Activated naive CD4-positive, alpha-beta T cell treated with anti-CD3 and anti-CD28 coated beads for 36 hours (primary cell): ENCODE measurements at regions of chr1 and their contacts with region 1.

Region 1: DNA sequence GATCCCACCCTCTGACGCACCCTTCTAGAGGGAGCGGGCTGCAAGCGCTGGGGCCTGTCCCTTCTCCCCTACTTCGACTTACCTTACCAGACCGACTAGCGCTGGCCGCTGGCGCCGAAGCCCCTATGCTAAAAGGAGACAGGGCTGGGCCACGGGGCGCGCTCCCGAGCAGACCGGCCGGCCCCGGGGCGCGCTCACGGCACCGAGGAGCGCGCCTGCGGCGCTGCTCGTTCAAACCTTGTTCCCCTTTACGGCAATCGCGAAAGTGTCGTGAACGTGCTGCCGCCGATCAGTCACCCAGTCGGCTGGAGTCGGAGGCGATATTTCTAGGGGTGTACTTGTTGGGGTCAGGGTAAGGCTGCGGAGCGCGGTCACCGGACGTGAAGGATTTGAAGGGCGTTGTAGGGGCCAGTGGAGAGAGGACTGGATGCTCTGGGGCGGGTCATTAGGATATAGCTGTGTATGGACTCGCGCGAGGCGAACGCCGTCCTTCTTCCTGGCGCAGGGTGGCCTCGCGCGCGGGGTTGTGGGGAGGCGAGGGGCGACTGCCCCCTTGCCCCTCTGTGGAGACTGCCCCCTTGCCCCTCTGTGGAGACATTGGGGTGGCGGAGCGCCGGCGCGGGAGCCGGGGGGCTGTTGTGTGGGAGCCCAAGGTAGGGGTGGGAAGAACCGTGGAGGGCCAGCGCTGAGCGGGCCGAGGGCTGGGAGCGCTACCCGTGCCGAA is at the starts of genes CEPT1 and DRAM2:
- DNase-seq: peak; percentile 98
- H3K4me3 Mint-ChIP-seq: peak within 1 kb of the TSS; percentile 94
- H3K27ac Mint-ChIP-seq: peak within 1 kb of the TSS; percentile 91
- H3K4me1 Mint-ChIP-seq: peaks cover 49% of the 10 kb centered on the region
- H3K27me3 Mint-ChIP-seq: no peaks in the 10 kb centered on the region
- total RNA-seq, gene CEPT1: 29.0 to 30.3 TPM
- total RNA-seq, gene DRAM2: 27.7 to 31.1 TPM

Region 2: GRCh38 chr1:110963691-110964399 is 176.3 kb before region 1 on chr1 and contains the start of gene LRIF1:
- CTCF ChIA-PET with region 1: no interaction called
- intact Hi-C with region 1: loop called (anchors 5 kb)
- DNase-seq: peak; percentile 100
- H3K4me3 Mint-ChIP-seq: peak within 1 kb of the TSS; percentile 83
- H3K27ac Mint-ChIP-seq: peak within 1 kb of the TSS; percentile 96
- H3K4me1 Mint-ChIP-seq: peaks cover 34% of the 10 kb centered on the region
- H3K27me3 Mint-ChIP-seq: peaks cover 8% of the 10 kb centered on the region
- total RNA-seq, gene LRIF1: 12.0 to 12.3 TPM

Region 3: DNA sequence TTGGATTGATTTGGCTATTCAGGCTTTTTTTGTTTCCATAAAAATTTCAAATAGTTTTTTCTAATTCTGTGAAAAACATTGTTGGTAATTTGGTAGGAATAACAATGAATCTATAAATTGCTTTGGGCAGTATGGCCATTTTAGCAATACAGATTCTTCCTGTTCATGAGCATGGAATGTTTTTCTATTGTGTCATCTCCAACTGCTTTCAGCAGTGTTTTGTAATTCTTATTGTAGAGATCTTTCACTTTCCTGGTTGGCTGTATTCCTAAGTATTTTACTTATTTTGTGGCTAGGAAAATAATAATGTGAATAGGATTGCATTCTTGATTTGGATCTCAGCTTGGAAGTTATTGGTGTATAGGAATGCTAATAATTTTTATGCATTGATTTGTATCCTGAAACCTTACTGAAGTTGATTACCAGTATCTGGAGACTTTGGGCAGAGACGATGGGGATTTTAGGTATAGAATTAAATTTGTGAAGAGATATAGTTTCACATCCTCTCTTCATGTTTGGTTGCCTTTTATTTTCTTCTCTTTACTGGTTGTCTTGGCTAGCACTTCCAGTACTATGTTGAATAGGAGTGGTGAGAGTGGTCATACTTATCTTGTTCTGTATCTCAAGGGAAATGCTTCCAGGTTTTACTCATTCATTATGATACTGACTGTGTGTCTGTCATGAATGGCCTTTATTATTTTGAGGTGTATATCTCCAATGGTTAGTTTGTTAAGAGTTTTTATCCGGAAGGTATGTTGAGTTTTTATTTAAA is 57.5 kb before region 1 on chr1:
- CTCF ChIA-PET with region 1: no interaction called
- intact Hi-C with region 1: no loop called
- DNase-seq: no peak
- H3K4me3 Mint-ChIP-seq: no peak overlapping the region
- H3K27ac Mint-ChIP-seq: no peak overlapping the region
- H3K4me1 Mint-ChIP-seq: no peaks in the 10 kb centered on the region
- H3K27me3 Mint-ChIP-seq: peaks cover 14% of the 10 kb centered on the region

Region 4: DNA sequence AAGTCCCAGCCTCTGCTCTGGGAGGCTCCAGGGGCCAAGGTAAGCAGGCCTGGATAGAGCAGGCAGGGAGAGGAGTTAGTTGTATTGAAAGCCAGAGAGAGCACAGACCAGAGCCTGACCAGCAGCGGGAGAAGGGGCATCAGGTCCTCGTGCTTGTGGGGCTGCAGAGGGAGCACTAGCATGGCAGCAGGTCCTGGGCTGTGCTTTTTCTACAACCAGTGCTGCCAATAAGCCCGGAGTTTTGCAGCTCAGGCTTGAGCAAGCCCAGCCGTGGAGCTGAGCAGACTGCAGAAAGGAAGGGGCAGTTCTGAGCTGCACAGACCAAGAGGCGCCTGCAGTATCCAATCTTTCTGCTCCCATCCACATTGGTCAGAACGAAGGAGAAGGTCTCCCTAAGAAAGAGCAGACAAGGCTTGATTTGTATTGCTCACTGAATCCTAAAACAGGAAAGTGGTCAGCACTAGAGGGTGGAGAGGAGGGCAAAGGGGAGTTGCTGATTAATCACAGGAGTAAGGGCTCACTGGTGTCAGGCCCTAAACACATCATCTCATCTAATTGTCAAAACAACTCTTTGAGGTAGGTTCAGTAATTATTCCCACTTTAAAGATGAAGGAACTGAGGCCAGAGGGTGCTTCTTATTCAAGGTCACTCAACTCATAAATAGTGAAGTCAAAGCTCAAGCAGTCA is 57.6 kb after region 1 on chr1:
- CTCF ChIA-PET with region 1: no interaction called
- intact Hi-C with region 1: loop called (anchors 1 kb)
- DNase-seq: peak; percentile 70
- H3K4me3 Mint-ChIP-seq: peak overlapping the region; percentile 98
- H3K27ac Mint-ChIP-seq: peak overlapping the region; percentile 99
- H3K4me1 Mint-ChIP-seq: peaks cover 71% of the 10 kb centered on the region
- H3K27me3 Mint-ChIP-seq: no peaks in the 10 kb centered on the region

Region 5: GRCh38 chr1:111275079-111275478 is 135.0 kb after region 1 on chr1:
- CTCF ChIA-PET with region 1: no interaction called
- intact Hi-C with region 1: loop called (anchors 5 kb)
- DNase-seq: peak; percentile 46
- H3K4me3 Mint-ChIP-seq: no peak overlapping the region
- H3K27ac Mint-ChIP-seq: peak overlapping the region; percentile 32
- H3K4me1 Mint-ChIP-seq: peaks cover 47% of the 10 kb centered on the region
- H3K27me3 Mint-ChIP-seq: peaks cover 22% of the 10 kb centered on the region

Region 6: DNA sequence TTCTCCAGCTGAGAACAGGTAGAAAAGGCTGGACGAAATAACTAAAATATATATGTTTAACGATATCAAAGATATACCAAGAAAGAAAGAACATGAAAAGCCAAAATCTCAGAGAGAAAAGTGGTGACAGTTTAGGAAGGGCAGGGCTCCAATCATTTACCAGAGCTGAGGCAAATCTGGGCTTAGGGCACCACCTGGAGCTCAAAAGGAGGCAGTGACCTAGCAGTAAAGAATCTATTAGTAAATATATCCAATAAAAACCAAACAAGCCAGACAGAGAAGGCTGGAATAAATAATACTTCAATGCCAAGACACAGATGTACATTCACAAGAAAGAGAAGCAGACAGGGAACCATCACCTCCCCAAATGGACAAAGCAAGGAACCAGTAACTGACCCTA is 194.1 kb after region 1 on chr1:
- CTCF ChIA-PET with region 1: interaction called, 3 read pairs
- intact Hi-C with region 1: loop called (anchors 5 kb)
- DNase-seq: peak; percentile 76
- H3K4me3 Mint-ChIP-seq: no peak overlapping the region
- H3K27ac Mint-ChIP-seq: no peak overlapping the region
- H3K4me1 Mint-ChIP-seq: no peaks in the 10 kb centered on the region
- H3K27me3 Mint-ChIP-seq: no peaks in the 10 kb centered on the region

Region 7: GRCh38 chr1:111448918-111449702 is 309.0 kb after region 1 on chr1 and contains the starts of genes ATP5PB and WDR77:
- CTCF ChIA-PET with region 1: no interaction called
- intact Hi-C with region 1: loop called (anchors 1 kb)
- DNase-seq: peak; percentile 96
- H3K4me3 Mint-ChIP-seq: peak within 1 kb of the TSS; percentile 100
- H3K27ac Mint-ChIP-seq: peak within 1 kb of the TSS; percentile 96
- H3K4me1 Mint-ChIP-seq: peaks cover 71% of the 10 kb centered on the region
- H3K27me3 Mint-ChIP-seq: no peaks in the 10 kb centered on the region
- total RNA-seq, gene ATP5PB: 324 to 331 TPM
- total RNA-seq, gene WDR77: 43.1 to 48.8 TPM